Calu3 (cell line): ENCODE measurements at regions of chr14 and their contacts with region 1.

Region 1: DNA sequence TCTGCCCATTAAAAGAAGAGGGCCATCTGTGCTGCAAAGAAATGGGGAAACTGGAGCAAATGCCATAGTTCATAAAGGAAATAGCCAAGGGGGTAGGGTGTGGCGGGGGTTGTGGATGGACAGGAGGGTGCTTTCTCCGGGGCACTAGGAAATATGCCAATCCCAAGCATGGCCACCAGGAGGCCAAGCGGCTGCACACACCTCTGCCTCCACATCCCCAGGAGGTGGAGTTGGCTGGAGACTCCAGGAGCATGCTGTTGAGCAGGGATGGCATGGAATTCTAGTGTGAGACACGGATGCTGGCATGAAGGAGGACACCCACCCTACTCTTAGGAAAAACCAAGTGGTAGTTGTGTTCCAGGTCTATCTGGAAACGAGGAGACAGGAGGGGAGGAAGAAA is 25.2 kb downstream of the NID2 start:
- DNase-seq: peak; percentile 71
- H3K4me3 Mint-ChIP-seq: no peak overlapping the region
- H3K27ac Mint-ChIP-seq: no peak overlapping the region
- H3K4me1 Mint-ChIP-seq: peaks cover 16% of the 10 kb centered on the region
- H3K27me3 Mint-ChIP-seq: peaks cover 7% of the 10 kb centered on the region
- CTCF ChIP-seq: peak; percentile 72

Region 2: DNA sequence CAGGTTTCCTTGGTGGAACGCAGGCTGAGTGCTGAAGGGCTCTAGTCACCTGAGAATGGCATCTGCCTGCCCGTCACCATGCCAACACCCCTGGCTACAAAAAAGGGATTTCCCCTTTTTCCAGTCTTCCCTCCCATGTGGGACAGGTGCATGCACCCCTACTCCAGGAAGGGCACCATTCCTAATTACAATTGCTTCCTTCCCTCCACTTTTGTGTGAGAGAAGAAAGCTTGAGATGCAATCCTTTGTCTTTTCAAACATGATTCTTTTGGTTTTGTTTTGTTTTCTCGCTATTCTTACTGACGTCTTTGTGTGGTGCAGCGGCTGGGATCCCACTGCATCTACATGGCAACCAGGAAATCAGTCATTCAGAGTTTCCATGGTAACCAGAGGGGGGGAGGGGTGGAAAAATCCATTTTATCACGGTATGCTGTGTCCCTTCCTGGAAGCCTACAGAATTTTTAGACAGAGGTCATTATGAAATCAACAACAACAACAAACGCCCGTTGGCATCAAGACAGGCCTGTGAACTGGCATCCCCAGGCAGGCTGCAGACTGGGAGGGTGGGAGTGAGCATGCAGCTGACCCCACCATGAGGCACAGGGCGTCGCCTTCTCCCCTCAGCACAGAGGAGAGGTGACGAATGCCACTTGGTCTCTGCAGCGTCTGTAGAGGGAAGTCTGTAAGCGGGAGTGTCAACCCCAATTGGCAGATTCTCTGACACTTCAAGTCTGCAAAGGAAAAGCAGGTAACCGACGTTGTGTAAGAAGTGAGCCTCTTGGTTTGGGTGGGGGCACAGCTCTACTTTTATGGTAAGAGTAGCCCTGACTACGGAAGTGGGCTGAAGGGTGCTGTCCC is 196.8 kb before region 1 on chr14:
- CTCF ChIA-PET with region 1: no interaction called
- intact Hi-C with region 1: no loop called
- DNase-seq: peak; percentile 62
- H3K4me3 Mint-ChIP-seq: peak overlapping the region; percentile 60
- H3K27ac Mint-ChIP-seq: peak overlapping the region; percentile 86
- H3K4me1 Mint-ChIP-seq: peaks cover 8% of the 10 kb centered on the region
- H3K27me3 Mint-ChIP-seq: no peaks in the 10 kb centered on the region
- CTCF ChIP-seq: no peak

Region 3: GRCh38 chr14:51889851-51890250 is 153.8 kb before region 1 on chr14:
- CTCF ChIA-PET with region 1: no interaction called
- intact Hi-C with region 1: no loop called
- DNase-seq: no peak
- H3K4me3 Mint-ChIP-seq: no peak overlapping the region
- H3K27ac Mint-ChIP-seq: no peak overlapping the region
- H3K4me1 Mint-ChIP-seq: peaks cover 2% of the 10 kb centered on the region
- H3K27me3 Mint-ChIP-seq: peaks cover 32% of the 10 kb centered on the region
- CTCF ChIP-seq: no peak

Region 4: GRCh38 chr14:52080817-52081755 is 37.4 kb after region 1 on chr14:
- CTCF ChIA-PET with region 1: no interaction called
- intact Hi-C with region 1: no loop called
- DNase-seq: peak; percentile 14
- H3K4me3 Mint-ChIP-seq: no peak overlapping the region
- H3K27ac Mint-ChIP-seq: no peak overlapping the region
- H3K4me1 Mint-ChIP-seq: peaks cover 31% of the 10 kb centered on the region
- H3K27me3 Mint-ChIP-seq: peaks cover 19% of the 10 kb centered on the region
- CTCF ChIP-seq: no peak

Region 5: DNA sequence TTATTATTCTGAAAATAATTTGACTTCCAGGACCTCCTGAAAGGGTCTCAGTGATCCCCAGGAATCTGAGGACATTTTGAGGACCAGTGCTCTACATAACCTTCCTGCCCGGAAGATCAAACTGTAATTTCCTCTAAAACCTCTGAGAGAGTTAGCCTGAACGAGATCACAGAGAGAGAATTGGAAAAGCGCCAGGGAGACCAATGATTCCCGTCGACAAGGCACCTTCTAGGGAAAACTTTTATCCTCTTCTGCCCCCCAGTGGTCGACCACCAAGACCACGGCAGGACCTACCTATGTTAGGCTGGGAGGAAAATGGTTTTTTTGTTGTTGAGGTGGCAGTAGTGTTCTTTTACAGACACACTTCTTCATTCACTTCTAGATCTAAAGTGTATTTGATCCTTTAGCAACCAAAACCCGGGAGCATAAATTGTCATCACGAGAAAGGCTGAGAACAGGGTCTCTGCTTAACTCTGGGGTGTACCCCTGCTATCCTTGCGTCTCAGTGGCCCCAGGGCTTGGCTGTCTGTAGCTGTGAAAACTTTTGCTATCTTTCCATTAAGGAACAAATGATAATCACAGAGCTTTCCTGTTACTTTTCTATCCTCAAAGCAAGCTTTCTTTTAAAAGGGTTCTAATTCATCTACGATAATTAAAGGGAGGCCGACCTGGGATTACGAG is 88.1 kb after region 1 on chr14:
- CTCF ChIA-PET with region 1: no interaction called
- intact Hi-C with region 1: loop called (anchors 1 kb)
- DNase-seq: peak; percentile 84
- H3K4me3 Mint-ChIP-seq: no peak overlapping the region
- H3K27ac Mint-ChIP-seq: no peak overlapping the region
- H3K4me1 Mint-ChIP-seq: no peaks in the 10 kb centered on the region
- H3K27me3 Mint-ChIP-seq: peaks cover 26% of the 10 kb centered on the region
- CTCF ChIP-seq: peak; percentile 46

Region 6: GRCh38 chr14:52473557-52473956 is 429.9 kb after region 1 on chr14:
- CTCF ChIA-PET with region 1: no interaction called
- intact Hi-C with region 1: loop called (anchors 2 kb)
- DNase-seq: peak; percentile 4
- H3K4me3 Mint-ChIP-seq: no peak overlapping the region
- H3K27ac Mint-ChIP-seq: no peak overlapping the region
- H3K4me1 Mint-ChIP-seq: no peaks in the 10 kb centered on the region
- H3K27me3 Mint-ChIP-seq: no peaks in the 10 kb centered on the region
- CTCF ChIP-seq: no peak